ENCODE measurements at regions of chr17 and their contacts with region 1.

Region 1: DNA sequence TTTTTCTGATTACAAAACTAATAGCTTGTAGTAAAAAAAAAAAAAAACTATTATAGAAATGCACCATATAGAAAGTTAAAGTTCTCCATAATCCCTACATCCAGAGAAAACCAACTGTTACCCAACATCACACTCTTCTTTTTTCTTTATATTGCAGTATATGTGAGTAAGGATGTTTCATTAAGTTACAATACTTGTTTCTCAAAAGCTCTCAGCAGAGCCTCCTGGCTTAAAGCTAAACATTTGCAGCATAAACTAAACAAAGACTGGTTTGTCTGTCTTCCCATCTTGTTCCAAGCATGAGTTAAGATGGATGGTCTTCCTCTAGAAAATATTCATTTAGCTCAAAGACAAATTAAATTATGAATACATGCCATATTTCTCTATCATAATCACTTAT is 25.2 kb downstream of the GRB2 start:
- DNase-seq: no peak
- ATAC-seq: no peak
- H3K4me3 ChIP-seq: no peak overlapping the region
- H3K4me3 Mint-ChIP-seq: peak overlapping the region in 1 of 3 donors; percentile 17
- H3K27ac ChIP-seq: no peak overlapping the region
- H3K27ac Mint-ChIP-seq: peak overlapping the region in 1 of 2 donors; percentile 62
- H3K4me1 ChIP-seq: peaks cover 7 to 42% of the 10 kb centered on the region in 2 experiments
- H3K4me1 Mint-ChIP-seq: peaks cover 61 to 77% (median 67%) of the 10 kb centered on the region in 3 donors
- H3K27me3 ChIP-seq: no peaks in the 10 kb centered on the region
- H3K27me3 Mint-ChIP-seq: no peaks in the 10 kb centered on the region

Region 2: GRCh38 chr17:75352079-75352569 is 28.2 kb before region 1 on chr17:
- CTCF ChIA-PET with region 1: interaction called in 1 of 2 experiments, 3 read pairs
- POLR2A ChIA-PET with region 1: interaction called, 5 to 16 read pairs
- DNase-seq: no peak
- ATAC-seq: peak in 1 of 4 experiments; percentile 34
- H3K4me3 ChIP-seq: no peak overlapping the region
- H3K4me3 Mint-ChIP-seq: peak overlapping the region in 1 of 3 donors; percentile 13
- H3K27ac ChIP-seq: no peak overlapping the region
- H3K27ac Mint-ChIP-seq: peak overlapping the region; percentile 39 to 80
- H3K4me1 ChIP-seq: peaks cover 43 to 54% of the 10 kb centered on the region in 2 experiments
- H3K4me1 Mint-ChIP-seq: peaks cover 78% of the 10 kb centered on the region in 3 donors
- H3K27me3 ChIP-seq: no peaks in the 10 kb centered on the region
- H3K27me3 Mint-ChIP-seq: no peaks in the 10 kb centered on the region

Region 3: GRCh38 chr17:75364078-75364477 is 16.2 kb before region 1 on chr17:
- CTCF ChIA-PET with region 1: interaction called in 1 of 2 experiments, 4 read pairs
- POLR2A ChIA-PET with region 1: interaction called in 1 of 2 experiments, 10 read pairs
- DNase-seq: no peak
- ATAC-seq: peak in 1 of 4 experiments; percentile 11
- H3K4me3 ChIP-seq: no peak overlapping the region
- H3K4me3 Mint-ChIP-seq: peak overlapping the region in 1 of 3 donors; percentile 58
- H3K27ac ChIP-seq: no peak overlapping the region
- H3K27ac Mint-ChIP-seq: peak overlapping the region; percentile 1 to 57
- H3K4me1 ChIP-seq: peaks cover 38 to 39% of the 10 kb centered on the region in 2 experiments
- H3K4me1 Mint-ChIP-seq: peaks cover 93 to 97% (median 93%) of the 10 kb centered on the region in 3 donors
- H3K27me3 ChIP-seq: no peaks in the 10 kb centered on the region
- H3K27me3 Mint-ChIP-seq: no peaks in the 10 kb centered on the region

Region 4: GRCh38 chr17:75393523-75394331 is 13.4 kb after region 1 on chr17:
- CTCF ChIA-PET with region 1: interaction called, 4 to 13 read pairs
- POLR2A ChIA-PET with region 1: interaction called in 1 of 2 experiments, 3 read pairs
- DNase-seq: peak; percentile 59 to 89 (median 72)
- ATAC-seq: peak; percentile 87 to 93 (median 92)
- H3K4me3 ChIP-seq: peak overlapping the region; percentile 53 to 75
- H3K4me3 Mint-ChIP-seq: peak overlapping the region; percentile 88 to 91 (median 89)
- H3K27ac ChIP-seq: peak overlapping the region; percentile 38
- H3K27ac Mint-ChIP-seq: peak overlapping the region; percentile 79 to 92
- H3K4me1 ChIP-seq: peaks cover 39 to 46% of the 10 kb centered on the region in 2 experiments
- H3K4me1 Mint-ChIP-seq: peaks cover 84 to 93% (median 85%) of the 10 kb centered on the region in 3 donors
- H3K27me3 ChIP-seq: no peaks in the 10 kb centered on the region
- H3K27me3 Mint-ChIP-seq: no peaks in the 10 kb centered on the region